T-cell (primary cell): ENCODE measurements at regions of chr4 and their contacts with region 1.

Region 1: GRCh38 chr4:123401271-123402120 is 4.9 kb downstream of the SPRY1 start:
- DNase-seq: no peak
- ATAC-seq: no peak
- H3K4me3 ChIP-seq: no peak overlapping the region
- H3K4me3 Mint-ChIP-seq: no peak overlapping the region
- H3K27ac ChIP-seq: no peak overlapping the region
- H3K27ac Mint-ChIP-seq: no peak overlapping the region
- H3K4me1 ChIP-seq: peaks cover 6 to 29% of the 10 kb centered on the region in 2 experiments
- H3K4me1 Mint-ChIP-seq: peaks cover 21 to 25% (median 24%) of the 10 kb centered on the region in 3 donors
- H3K27me3 ChIP-seq: peaks cover 0 to 27% of the 10 kb centered on the region in 2 experiments
- H3K27me3 Mint-ChIP-seq: peaks cover 5 to 40% of the 10 kb centered on the region in 2 donors

Region 2: GRCh38 chr4:122959981-122960610 is 441.4 kb before region 1 on chr4:
- CTCF ChIA-PET with region 1: no interaction called
- POLR2A ChIA-PET with region 1: no interaction called
- DNase-seq: no peak
- ATAC-seq: no peak
- H3K4me3 ChIP-seq: no peak overlapping the region
- H3K4me3 Mint-ChIP-seq: no peak overlapping the region
- H3K27ac ChIP-seq: no peak overlapping the region
- H3K27ac Mint-ChIP-seq: no peak overlapping the region
- H3K4me1 ChIP-seq: no peaks in the 10 kb centered on the region
- H3K4me1 Mint-ChIP-seq: peaks cover 2 to 6% (median 3%) of the 10 kb centered on the region in 3 donors
- H3K27me3 ChIP-seq: no peaks in the 10 kb centered on the region
- H3K27me3 Mint-ChIP-seq: no peaks in the 10 kb centered on the region

Region 3: GRCh38 chr4:123418351-123418931 is 16.9 kb after region 1 on chr4:
- CTCF ChIA-PET with region 1: no interaction called
- POLR2A ChIA-PET with region 1: no interaction called
- DNase-seq: no peak
- ATAC-seq: no peak
- H3K4me3 ChIP-seq: no peak overlapping the region
- H3K4me3 Mint-ChIP-seq: no peak overlapping the region
- H3K27ac ChIP-seq: no peak overlapping the region
- H3K27ac Mint-ChIP-seq: peak overlapping the region; percentile 37 to 73
- H3K4me1 ChIP-seq: peaks cover 0 to 11% of the 10 kb centered on the region in 2 experiments
- H3K4me1 Mint-ChIP-seq: peaks cover 34 to 45% (median 38%) of the 10 kb centered on the region in 3 donors
- H3K27me3 ChIP-seq: no peaks in the 10 kb centered on the region
- H3K27me3 Mint-ChIP-seq: peaks cover 0 to 2% of the 10 kb centered on the region in 2 donors

Region 4: DNA sequence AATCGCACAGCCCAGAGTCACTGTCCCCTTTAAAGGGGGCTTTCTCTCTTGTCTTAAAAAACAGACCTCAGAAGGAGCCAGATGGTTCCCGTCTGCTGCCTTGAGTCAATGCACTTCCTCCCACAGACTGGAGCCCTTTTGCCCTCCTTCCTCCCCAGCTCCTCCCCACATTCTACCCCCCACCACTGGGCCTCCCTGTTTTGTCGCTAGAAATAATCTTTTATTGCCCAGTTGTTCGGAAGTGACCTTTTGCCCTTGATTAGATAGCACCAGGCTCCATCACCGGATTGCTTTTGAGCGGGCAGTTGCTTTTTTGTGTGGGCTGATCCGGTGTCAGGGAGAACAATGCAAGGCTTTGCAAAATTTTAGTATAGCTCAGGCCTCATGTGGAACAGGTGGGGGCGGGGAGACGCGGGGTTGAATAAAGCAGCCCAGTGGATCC is 42.8 kb after region 1 on chr4:
- CTCF ChIA-PET with region 1: no interaction called
- POLR2A ChIA-PET with region 1: interaction called, 3 to 14 read pairs
- DNase-seq: peak in 23 of 35 experiments; percentile 2 to 43 (median 12)
- ATAC-seq: peak; percentile 65 to 90 (median 82)
- H3K4me3 ChIP-seq: no peak overlapping the region
- H3K4me3 Mint-ChIP-seq: peak overlapping the region; percentile 4 to 70 (median 11)
- H3K27ac ChIP-seq: no peak overlapping the region
- H3K27ac Mint-ChIP-seq: peak overlapping the region; percentile 52 to 86
- H3K4me1 ChIP-seq: peaks cover 11 to 19% of the 10 kb centered on the region in 2 experiments
- H3K4me1 Mint-ChIP-seq: peaks cover 20% of the 10 kb centered on the region in 3 donors
- H3K27me3 ChIP-seq: no peaks in the 10 kb centered on the region
- H3K27me3 Mint-ChIP-seq: no peaks in the 10 kb centered on the region